MCF 10A (cell line): ENCODE measurements at regions of chr10 and their contacts with region 1.

Region 1: GRCh38 chr10:27155066-27155754 is at the start of gene MASTL:
- DNase-seq: peak; percentile 95
- H3K4me3 Mint-ChIP-seq: peak within 1 kb of the TSS; percentile 83
- H3K27ac Mint-ChIP-seq: peak within 1 kb of the TSS; percentile 98
- H3K4me1 Mint-ChIP-seq: peaks cover 24% of the 10 kb centered on the region
- H3K27me3 Mint-ChIP-seq: no peaks in the 10 kb centered on the region
- CTCF ChIP-seq: no peak
- total RNA-seq, gene MASTL: 6.1 and 8.0 TPM in 2 replicates

Region 2: GRCh38 chr10:27099916-27100812 is 55.0 kb before region 1 on chr10 and contains the start of gene ANKRD26:
- CTCF ChIA-PET with region 1: no interaction called
- POLR2A ChIA-PET with region 1: interaction called, 10 read pairs
- intact Hi-C with region 1: no loop called
- DNase-seq: peak; percentile 97
- H3K4me3 Mint-ChIP-seq: peak within 1 kb of the TSS; percentile 81
- H3K27ac Mint-ChIP-seq: peak within 1 kb of the TSS; percentile 92
- H3K4me1 Mint-ChIP-seq: peaks cover 13% of the 10 kb centered on the region
- H3K27me3 Mint-ChIP-seq: no peaks in the 10 kb centered on the region
- CTCF ChIP-seq: no peak
- total RNA-seq, gene ANKRD26: 6.5 and 7.3 TPM in 2 replicates

Region 3: DNA sequence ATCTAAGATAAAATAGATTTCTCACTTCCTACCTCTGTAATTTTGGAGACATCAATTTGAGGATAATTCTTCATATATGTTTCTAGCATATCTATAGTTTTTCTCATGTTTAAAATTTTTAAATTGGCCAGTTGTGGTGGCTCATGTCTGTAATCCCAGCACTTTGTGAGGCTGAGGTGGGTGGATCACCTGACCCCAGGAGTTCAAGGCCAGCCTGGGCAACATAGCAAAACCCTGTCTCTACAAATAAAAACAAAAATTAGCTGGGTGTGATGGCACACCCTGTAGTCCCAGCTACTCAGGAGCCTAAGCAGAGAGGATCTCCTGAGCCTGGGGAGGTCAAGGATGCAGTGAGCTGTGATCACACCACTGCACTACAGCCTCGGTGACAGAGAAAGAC is 80.5 kb after region 1 on chr10:
- CTCF ChIA-PET with region 1: no interaction called
- POLR2A ChIA-PET with region 1: interaction called, 39 read pairs
- intact Hi-C with region 1: no loop called
- DNase-seq: no peak
- H3K4me3 Mint-ChIP-seq: no peak overlapping the region
- H3K27ac Mint-ChIP-seq: no peak overlapping the region
- H3K4me1 Mint-ChIP-seq: no peaks in the 10 kb centered on the region
- H3K27me3 Mint-ChIP-seq: no peaks in the 10 kb centered on the region
- CTCF ChIP-seq: no peak

Region 4: GRCh38 chr10:27241652-27242472 is 86.7 kb after region 1 on chr10:
- CTCF ChIA-PET with region 1: interaction called, 3 read pairs
- POLR2A ChIA-PET with region 1: interaction called, 39 read pairs
- intact Hi-C with region 1: loop called (anchors 1 kb)
- DNase-seq: peak; percentile 95
- H3K4me3 Mint-ChIP-seq: peak overlapping the region; percentile 86
- H3K27ac Mint-ChIP-seq: peak overlapping the region; percentile 94
- H3K4me1 Mint-ChIP-seq: peaks cover 7% of the 10 kb centered on the region
- H3K27me3 Mint-ChIP-seq: no peaks in the 10 kb centered on the region
- CTCF ChIP-seq: no peak

Region 5: GRCh38 chr10:27360581-27361172 is 205.5 kb after region 1 on chr10:
- CTCF ChIA-PET with region 1: interaction called, 7 read pairs
- POLR2A ChIA-PET with region 1: interaction called, 4 read pairs
- intact Hi-C with region 1: loop called (anchors 1 kb)
- DNase-seq: peak; percentile 88
- H3K4me3 Mint-ChIP-seq: no peak overlapping the region
- H3K27ac Mint-ChIP-seq: no peak overlapping the region
- H3K4me1 Mint-ChIP-seq: peaks cover 6% of the 10 kb centered on the region
- H3K27me3 Mint-ChIP-seq: no peaks in the 10 kb centered on the region
- CTCF ChIP-seq: peak; percentile 90

Region 6: GRCh38 chr10:27671821-27672220 is 516.6 kb after region 1 on chr10:
- CTCF ChIA-PET with region 1: no interaction called
- POLR2A ChIA-PET with region 1: no interaction called
- intact Hi-C with region 1: no loop called
- DNase-seq: no peak
- H3K4me3 Mint-ChIP-seq: no peak overlapping the region
- H3K27ac Mint-ChIP-seq: no peak overlapping the region
- H3K4me1 Mint-ChIP-seq: no peaks in the 10 kb centered on the region
- H3K27me3 Mint-ChIP-seq: no peaks in the 10 kb centered on the region
- CTCF ChIP-seq: no peak